ENCODE measurements at regions of chr2 and their contacts with region 1.

Region 1: GRCh38 chr2:179440642-179441251 is 176.1 kb upstream of the SESTD1 start:
- H3K4me3 ChIP-seq: no peak overlapping the region
- H3K27ac ChIP-seq: no peak overlapping the region
- H3K4me1 ChIP-seq: no peaks in the 10 kb centered on the region
- CTCF ChIP-seq: no peak

Region 2: DNA sequence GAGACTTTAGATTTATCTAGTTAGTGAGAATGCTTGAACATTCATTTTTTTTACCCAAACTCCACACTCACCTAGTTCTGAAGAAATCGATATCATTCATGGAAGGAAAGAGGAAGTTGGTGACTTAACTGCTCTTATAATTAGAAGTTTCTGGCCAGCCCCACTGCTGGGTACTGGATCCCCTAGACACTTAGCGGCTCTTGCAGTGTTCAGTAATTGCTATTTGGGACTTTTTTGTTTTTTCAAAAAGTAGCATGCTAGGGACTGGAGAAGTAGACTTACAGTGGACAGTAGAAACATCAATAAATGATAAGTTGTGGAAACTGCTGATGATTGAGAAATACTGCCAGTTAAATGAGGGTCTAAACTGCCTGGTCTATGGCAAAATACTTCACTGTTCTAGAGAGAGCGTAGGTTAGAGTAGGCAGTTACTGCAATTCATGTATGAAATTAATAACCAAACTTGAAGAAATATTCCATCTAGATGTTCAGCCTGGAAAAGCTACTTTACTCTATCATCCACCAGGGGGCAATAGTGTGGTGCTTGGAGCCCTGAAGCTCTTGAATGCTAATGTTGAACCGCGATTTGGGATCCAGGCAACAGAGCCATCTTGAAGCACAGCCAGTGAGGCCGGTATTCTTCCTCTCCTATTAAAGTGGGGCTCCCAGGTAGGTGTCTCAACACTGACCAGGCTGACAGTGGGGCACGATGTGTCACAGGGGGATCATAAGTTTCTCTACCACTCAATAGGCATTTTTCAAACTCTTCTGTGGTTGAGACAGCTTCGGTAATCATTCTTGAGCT is 30.0 kb before region 1 on chr2:
- CTCF ChIA-PET with region 1: interaction called, 10 read pairs
- POLR2A ChIA-PET with region 1: no interaction called
- H3K4me3 ChIP-seq: no peak overlapping the region
- H3K27ac ChIP-seq: no peak overlapping the region
- H3K4me1 ChIP-seq: no peaks in the 10 kb centered on the region; the same call in 1 of the 2 replicates
- CTCF ChIP-seq: peak; percentile 62

Region 3: GRCh38 chr2:179454443-179455171 is 13.9 kb after region 1 on chr2:
- CTCF ChIA-PET with region 1: interaction called, 12 read pairs
- POLR2A ChIA-PET with region 1: no interaction called
- H3K4me3 ChIP-seq: no peak overlapping the region
- H3K27ac ChIP-seq: no peak overlapping the region
- H3K4me1 ChIP-seq: no peaks in the 10 kb centered on the region
- CTCF ChIP-seq: no peak

Region 4: GRCh38 chr2:179518830-179519229 is 78.1 kb after region 1 on chr2:
- CTCF ChIA-PET with region 1: no interaction called
- POLR2A ChIA-PET with region 1: no interaction called
- H3K4me3 ChIP-seq: no peak overlapping the region
- H3K27ac ChIP-seq: no peak overlapping the region
- H3K4me1 ChIP-seq: no peaks in the 10 kb centered on the region
- CTCF ChIP-seq: no peak

Measured in HEK293 (cell line).